IMR-90 (cell line): ENCODE measurements at regions of chr1 and their contacts with region 1.

Region 1: GRCh38 chr1:205523891-205524793 is 19.7 kb downstream of the CDK18 start:
- DNase-seq: peak; percentile 59
- ATAC-seq: peak; percentile 76
- H3K4me3 ChIP-seq: no peak overlapping the region
- H3K27ac ChIP-seq: no peak overlapping the region
- H3K4me1 ChIP-seq: peaks cover 3% of the 10 kb centered on the region; the same call in 1 of the 2 replicates
- H3K27me3 ChIP-seq: peaks cover 29% of the 10 kb centered on the region
- CTCF ChIP-seq: peak; percentile 84
- POLR2A ChIP-seq: no peak
- RAD21 ChIP-seq: peak; percentile 91

Region 2: DNA sequence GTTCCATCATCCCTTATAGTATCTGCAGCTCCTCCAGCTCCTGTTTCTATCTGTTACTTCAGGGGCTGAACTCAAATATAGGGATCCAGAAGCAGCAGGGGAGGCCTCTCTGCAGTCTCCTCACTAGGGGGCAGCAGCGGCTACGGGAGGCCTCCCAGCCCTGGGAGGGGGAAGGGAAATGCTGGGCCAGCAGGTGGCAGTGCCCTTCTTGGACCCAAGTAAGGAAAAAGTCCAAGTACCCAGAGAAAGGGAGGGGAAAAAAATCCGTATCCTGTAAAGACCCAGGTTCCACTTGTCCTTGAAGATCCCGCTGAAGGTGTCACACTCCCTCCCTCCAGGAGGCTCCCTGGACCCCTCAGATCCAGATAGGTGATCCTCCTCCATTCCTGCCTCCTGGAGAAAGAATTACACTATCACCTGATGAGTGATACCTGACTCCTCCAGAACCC is 188.5 kb before region 1 on chr1:
- CTCF ChIA-PET with region 1: interaction called, 6 read pairs
- POLR2A ChIA-PET with region 1: no interaction called
- dilution Hi-C with region 1: no loop called
- in situ Hi-C with region 1: loop called (anchors 5 kb)
- intact Hi-C with region 1: loop called (anchors 1 kb)
- DNase-seq: peak; percentile 62
- ATAC-seq: peak; percentile 95
- H3K4me3 ChIP-seq: no peak overlapping the region
- H3K27ac ChIP-seq: no peak overlapping the region
- H3K4me1 ChIP-seq: no peaks in the 10 kb centered on the region
- H3K27me3 ChIP-seq: peaks cover 69% of the 10 kb centered on the region
- CTCF ChIP-seq: peak; percentile 99
- POLR2A ChIP-seq: no peak
- RAD21 ChIP-seq: peak; percentile 90

Region 3: GRCh38 chr1:205485338-205486228 is 38.6 kb before region 1 on chr1:
- CTCF ChIA-PET with region 1: interaction called, 52 read pairs
- POLR2A ChIA-PET with region 1: no interaction called
- dilution Hi-C with region 1: no loop called
- in situ Hi-C with region 1: loop called (anchors 5 kb)
- intact Hi-C with region 1: loop called (anchors 1 kb)
- DNase-seq: peak; percentile 59
- ATAC-seq: peak; percentile 95
- H3K4me3 ChIP-seq: no peak overlapping the region
- H3K27ac ChIP-seq: no peak overlapping the region
- H3K4me1 ChIP-seq: no peaks in the 10 kb centered on the region
- H3K27me3 ChIP-seq: peaks cover 46% of the 10 kb centered on the region
- CTCF ChIP-seq: peak; percentile 90
- POLR2A ChIP-seq: no peak
- RAD21 ChIP-seq: peak; percentile 92

Region 4: GRCh38 chr1:205493241-205494085 is 30.7 kb before region 1 on chr1:
- CTCF ChIA-PET with region 1: interaction called, 52 read pairs
- POLR2A ChIA-PET with region 1: no interaction called
- dilution Hi-C with region 1: no loop called
- in situ Hi-C with region 1: loop called (anchors 5 kb)
- intact Hi-C with region 1: loop called (anchors 1 kb)
- DNase-seq: peak; percentile 56
- ATAC-seq: peak; percentile 91
- H3K4me3 ChIP-seq: no peak overlapping the region
- H3K27ac ChIP-seq: no peak overlapping the region
- H3K4me1 ChIP-seq: peaks cover 3% of the 10 kb centered on the region; the same call in 1 of the 2 replicates
- H3K27me3 ChIP-seq: peaks cover 57% of the 10 kb centered on the region
- CTCF ChIP-seq: no peak
- POLR2A ChIP-seq: no peak
- RAD21 ChIP-seq: no peak